ENCODE measurements at regions of chr2 and their contacts with region 1.

Region 1: DNA sequence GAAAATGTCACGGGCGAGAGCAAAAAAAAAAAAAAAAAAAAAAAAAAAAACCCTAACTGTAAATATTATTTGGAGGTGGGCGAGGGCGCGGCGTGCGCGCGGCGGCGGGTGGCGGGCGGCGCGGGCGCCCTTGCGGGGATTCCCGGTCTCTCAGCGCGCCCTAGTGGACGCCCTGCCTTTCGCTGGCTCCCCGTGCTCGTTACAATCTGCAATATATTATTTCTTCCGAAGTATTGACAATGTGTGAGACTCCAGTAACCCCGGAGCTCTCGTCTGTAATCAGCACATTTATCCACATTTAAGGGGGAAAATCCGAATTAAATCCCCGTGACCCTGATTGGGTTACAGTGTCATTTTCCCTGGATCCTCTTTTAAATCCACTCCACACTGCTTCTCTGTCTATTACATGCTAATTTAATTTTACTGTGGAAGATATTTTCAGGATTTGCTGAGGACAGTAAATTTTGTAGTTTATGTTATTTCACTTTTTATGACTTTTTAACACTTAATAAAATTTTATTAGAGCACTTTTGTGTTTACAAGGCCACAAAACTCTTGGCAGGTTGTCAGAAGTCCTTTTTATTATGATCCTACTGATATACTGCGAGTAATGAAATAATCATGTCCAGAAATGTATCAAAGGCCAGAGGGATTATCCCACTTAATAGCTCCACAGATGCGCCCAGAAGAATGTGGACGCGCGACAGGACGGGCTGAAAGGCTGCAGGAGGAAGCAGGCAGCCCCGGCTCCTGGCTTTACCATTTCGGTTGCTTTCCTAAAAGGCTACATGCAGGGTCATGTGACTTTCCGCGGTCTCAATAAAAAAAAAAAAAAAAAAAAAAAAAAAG is 369.1 kb downstream of the MTX2 start:
- DNase-seq: no peak
- H3K4me3 ChIP-seq: peak overlapping the region; percentile 63 to 76 (median 66)
- H3K27ac ChIP-seq: peak overlapping the region in 3 of 4 donors; percentile 66 to 76 (median 70)
- H3K4me1 ChIP-seq: peaks cover 8 to 15% (median 10%) of the 10 kb centered on the region in 4 donors
- H3K27me3 ChIP-seq: peaks cover 0 to 94% (median 11%) of the 10 kb centered on the region in 4 donors
- CTCF ChIP-seq: peak; percentile 69 to 77 (median 73)
- EP300 ChIP-seq: no peak
- POLR2A ChIP-seq: no peak

Region 2: DNA sequence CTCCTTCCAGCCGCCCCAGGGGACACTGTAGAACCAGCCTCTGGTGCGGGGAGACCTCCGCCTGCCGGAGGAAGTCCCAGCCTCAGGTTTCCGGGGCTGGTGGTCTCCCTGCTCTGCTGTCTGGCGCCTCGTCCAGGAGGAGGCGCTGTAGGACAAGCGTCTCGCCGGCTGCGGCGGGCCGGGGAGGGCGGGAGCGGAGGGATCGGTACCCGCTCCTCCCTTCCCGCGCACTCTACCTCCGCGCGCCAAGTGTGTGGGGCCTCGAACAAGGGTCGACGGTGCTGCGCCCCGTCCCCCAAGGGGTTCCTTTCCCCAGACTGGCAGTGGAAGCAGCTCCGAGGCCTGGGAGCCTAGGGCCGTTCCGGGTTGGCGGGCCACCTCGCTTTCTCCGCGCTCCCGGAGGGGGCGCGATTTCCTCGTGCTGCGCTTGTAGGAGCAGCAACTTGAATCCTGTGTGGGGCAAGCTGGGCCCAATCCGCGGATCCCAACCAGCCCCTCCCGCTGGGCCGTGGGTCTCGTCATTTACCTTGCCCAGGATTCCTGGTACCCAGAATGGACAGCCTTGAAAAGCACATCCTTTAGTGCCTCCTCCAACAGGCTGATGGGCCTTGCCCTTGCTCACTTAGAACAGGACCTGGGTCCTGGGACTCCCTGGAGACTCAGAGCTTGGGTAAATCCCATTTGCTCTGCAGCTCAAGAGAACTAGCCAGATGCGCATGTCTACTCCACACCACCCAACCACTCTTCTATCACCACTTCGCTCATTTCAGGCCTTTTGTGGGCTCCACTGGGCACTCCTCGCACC is 497.7 kb before region 1 on chr2:
- intact Hi-C with region 1: loop called (anchors 2 kb)
- DNase-seq: no peak
- H3K4me3 ChIP-seq: peak overlapping the region; percentile 49 to 65 (median 54)
- H3K27ac ChIP-seq: peak overlapping the region in 3 of 4 donors; percentile 22 to 37 (median 35)
- H3K4me1 ChIP-seq: peaks cover 22 to 41% (median 30%) of the 10 kb centered on the region in 4 donors
- H3K27me3 ChIP-seq: peaks cover 14 to 91% (median 51%) of the 10 kb centered on the region in 4 donors
- CTCF ChIP-seq: peak; percentile 75 to 92 (median 87)
- EP300 ChIP-seq: no peak
- POLR2A ChIP-seq: no peak

Region 3: GRCh38 chr2:176454893-176455811 is 183.2 kb before region 1 on chr2:
- intact Hi-C with region 1: loop called (anchors 5 kb)
- DNase-seq: peak; percentile 96
- H3K4me3 ChIP-seq: no peak overlapping the region
- H3K27ac ChIP-seq: peak overlapping the region; percentile 35 to 59 (median 46)
- H3K4me1 ChIP-seq: peaks cover 8 to 14% (median 10%) of the 10 kb centered on the region in 4 donors
- H3K27me3 ChIP-seq: peaks cover 0 to 37% (median 0%) of the 10 kb centered on the region in 4 donors
- CTCF ChIP-seq: peak; percentile 76 to 98 (median 96)
- EP300 ChIP-seq: no peak
- POLR2A ChIP-seq: no peak

Region 4: DNA sequence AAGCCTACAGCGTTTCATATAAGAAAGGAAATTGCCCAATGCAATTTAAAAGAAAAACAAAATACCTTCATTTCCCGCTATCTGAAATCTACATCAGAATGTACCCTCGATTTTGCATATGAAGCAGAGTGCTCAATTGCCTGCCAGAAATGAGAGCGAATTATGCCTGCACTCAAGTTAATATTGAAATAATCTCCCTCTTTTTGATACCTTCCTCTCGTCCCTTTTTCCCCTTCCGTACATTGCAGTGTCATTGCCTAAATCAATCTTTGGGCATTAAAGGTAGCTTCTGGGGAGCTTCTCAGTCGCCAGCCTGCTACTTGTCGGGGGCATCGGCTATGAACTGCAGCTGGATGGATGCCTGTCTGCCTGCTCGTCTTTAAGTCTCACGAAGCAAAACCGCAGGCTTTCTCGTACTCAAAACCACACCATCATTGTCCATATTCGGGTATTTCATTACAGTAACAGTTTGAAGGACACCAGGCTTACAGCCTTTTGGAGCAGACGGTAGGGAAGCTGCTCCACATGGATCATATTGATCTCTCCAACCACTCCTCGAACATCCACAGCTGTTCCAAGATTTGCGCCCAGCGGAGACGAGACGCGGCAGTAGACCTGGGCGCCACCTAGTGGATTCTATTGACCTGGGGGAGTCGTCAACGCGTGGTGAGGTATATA is 510.2 kb after region 1 on chr2:
- intact Hi-C with region 1: loop called (anchors 5 kb)
- DNase-seq: no peak
- H3K4me3 ChIP-seq: peak overlapping the region; percentile 43 to 54 (median 44)
- H3K27ac ChIP-seq: no peak overlapping the region
- H3K4me1 ChIP-seq: peaks cover 7 to 14% (median 10%) of the 10 kb centered on the region in 4 donors
- H3K27me3 ChIP-seq: peaks cover 0 to 68% (median 16%) of the 10 kb centered on the region in 4 donors
- CTCF ChIP-seq: peak; percentile 68 to 80 (median 73)
- EP300 ChIP-seq: no peak
- POLR2A ChIP-seq: no peak

Measured in esophagus muscularis mucosa (tissue), 4 donors.